ENCODE measurements at regions of chr2 and their contacts with region 1.

Region 1: DNA sequence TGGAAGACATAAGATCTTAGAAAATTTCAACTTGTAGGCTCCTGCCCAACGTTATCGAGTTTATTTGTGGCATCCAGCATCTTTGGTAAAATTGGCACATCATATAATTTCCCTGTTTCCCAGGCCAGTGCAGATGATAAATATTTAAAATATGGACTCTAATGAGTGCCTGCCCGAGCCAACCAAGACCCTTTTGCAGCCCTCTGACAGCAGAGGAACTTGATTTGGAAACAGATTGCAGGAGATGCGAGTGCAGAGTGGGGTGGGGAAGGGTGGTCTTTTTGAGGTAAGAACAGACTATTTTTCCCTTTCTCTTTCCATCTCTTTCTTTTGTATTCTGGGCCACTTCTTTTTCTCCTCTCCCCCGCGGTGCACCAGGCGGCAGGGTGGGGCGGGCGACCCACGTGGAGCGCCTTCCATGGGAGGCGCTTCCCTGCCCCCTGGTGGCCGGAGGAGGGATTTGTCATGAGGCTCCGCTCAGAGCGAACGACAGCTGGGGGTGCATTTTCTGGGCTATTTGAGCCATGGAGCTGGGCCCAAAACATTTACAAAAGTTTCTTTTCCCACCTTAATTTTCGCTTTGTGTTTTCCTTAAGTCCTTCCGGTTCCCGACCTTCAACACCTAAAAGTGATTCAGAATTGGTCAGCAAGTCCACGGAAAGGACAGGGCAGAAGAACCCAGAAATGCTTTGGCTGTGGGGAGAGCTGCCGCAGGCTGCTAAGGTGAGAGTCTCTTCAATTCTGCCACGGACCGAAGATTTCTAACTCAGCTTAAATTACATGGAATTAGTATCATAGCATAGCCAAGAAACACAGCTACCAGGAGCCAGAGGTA is 32.7 kb downstream of the LPIN1 start:
- DNase-seq: peak; percentile 87
- H3K4me3 Mint-ChIP-seq: peak overlapping the region; percentile 26
- H3K27ac Mint-ChIP-seq: peak overlapping the region; percentile 48
- H3K4me1 Mint-ChIP-seq: peaks cover 42% of the 10 kb centered on the region
- H3K27me3 Mint-ChIP-seq: no peaks in the 10 kb centered on the region

Region 2: DNA sequence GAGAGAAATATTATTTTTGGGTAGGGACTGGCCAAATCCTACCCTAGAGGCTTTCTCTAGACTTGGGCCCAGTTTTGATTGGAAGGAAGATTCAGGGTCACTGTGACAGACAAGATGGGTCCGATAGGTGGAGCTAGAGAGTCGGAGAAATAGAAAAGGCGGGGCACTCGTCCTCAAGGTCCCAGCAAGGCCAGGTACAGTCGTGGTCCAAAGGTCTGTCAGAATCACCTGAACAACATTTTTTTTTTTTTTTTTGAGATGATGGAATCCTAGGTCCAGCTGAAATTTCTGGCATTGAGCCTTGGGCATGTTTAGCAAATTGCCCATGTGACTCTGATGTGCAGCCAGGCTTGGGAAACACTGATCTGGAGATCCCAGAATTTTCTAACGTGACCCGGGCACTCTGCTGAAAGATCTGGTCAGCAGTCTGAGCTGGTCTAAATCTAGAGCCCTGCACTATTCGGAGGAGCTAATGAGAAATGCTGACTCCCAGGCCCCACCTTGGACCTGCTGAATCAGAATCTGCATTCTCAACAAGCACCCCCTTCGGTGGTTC is 86.1 kb before region 1 on chr2:
- CTCF ChIA-PET with region 1: interaction called, 22 read pairs
- POLR2A ChIA-PET with region 1: no interaction called
- DNase-seq: peak; percentile 78
- H3K4me3 Mint-ChIP-seq: no peak overlapping the region
- H3K27ac Mint-ChIP-seq: no peak overlapping the region
- H3K4me1 Mint-ChIP-seq: peaks cover 15% of the 10 kb centered on the region
- H3K27me3 Mint-ChIP-seq: peaks cover 3% of the 10 kb centered on the region

Region 3: GRCh38 chr2:11738589-11739436 is 40.3 kb before region 1 on chr2:
- CTCF ChIA-PET with region 1: interaction called, 29 read pairs
- POLR2A ChIA-PET with region 1: no interaction called
- DNase-seq: peak; percentile 31
- H3K4me3 Mint-ChIP-seq: no peak overlapping the region
- H3K27ac Mint-ChIP-seq: no peak overlapping the region
- H3K4me1 Mint-ChIP-seq: peaks cover 13% of the 10 kb centered on the region
- H3K27me3 Mint-ChIP-seq: peaks cover 2% of the 10 kb centered on the region

Region 4: DNA sequence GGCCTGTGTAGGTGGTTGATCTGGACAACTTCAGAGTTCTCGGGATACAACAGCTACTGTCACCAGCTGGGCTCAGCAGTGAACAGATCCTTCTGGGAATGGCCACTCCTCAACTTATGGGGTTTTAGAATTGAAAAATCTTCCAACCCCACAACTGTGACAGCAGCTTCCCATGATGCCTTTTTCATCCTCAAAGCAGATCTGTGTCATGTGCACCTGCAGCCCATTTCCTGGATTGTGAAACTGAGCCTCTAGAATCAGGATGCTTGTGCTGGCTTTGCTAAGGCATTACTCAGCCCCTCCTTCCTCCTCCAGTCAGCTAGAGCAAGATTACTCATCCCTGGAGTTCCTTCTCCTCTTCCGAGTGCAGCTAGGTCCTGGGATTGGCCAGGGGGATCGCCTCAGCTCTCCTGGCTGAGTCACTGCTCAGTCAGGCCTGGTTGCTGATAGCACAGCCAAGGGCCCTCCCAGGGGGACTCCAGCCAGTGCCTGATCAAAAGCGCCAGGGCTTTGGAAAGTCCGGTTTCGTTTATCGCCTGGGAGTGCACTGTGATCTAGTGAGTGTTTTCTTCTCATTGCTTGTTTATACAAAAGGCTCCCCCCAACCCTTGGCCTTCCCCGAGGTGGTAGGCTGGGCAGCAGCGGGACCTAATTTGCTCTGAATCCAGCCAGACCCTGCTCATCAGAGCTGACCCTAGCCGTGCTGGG is 35.1 kb before region 1 on chr2:
- CTCF ChIA-PET with region 1: interaction called, 29 read pairs
- POLR2A ChIA-PET with region 1: no interaction called
- DNase-seq: peak; percentile 65
- H3K4me3 Mint-ChIP-seq: peak overlapping the region; percentile 58
- H3K27ac Mint-ChIP-seq: peak overlapping the region; percentile 86
- H3K4me1 Mint-ChIP-seq: peaks cover 49% of the 10 kb centered on the region
- H3K27me3 Mint-ChIP-seq: no peaks in the 10 kb centered on the region

Measured in activated CD4-positive, alpha-beta T cell treated with anti-CD3 and anti-CD28 coated beads, Interleukin-2, amount 10 ng/mL, durations not matched to agents 7 days and 5 days (primary cell).